PC-9 (cell line): ENCODE measurements at regions of chr7 and their contacts with region 1.

Region 1: DNA sequence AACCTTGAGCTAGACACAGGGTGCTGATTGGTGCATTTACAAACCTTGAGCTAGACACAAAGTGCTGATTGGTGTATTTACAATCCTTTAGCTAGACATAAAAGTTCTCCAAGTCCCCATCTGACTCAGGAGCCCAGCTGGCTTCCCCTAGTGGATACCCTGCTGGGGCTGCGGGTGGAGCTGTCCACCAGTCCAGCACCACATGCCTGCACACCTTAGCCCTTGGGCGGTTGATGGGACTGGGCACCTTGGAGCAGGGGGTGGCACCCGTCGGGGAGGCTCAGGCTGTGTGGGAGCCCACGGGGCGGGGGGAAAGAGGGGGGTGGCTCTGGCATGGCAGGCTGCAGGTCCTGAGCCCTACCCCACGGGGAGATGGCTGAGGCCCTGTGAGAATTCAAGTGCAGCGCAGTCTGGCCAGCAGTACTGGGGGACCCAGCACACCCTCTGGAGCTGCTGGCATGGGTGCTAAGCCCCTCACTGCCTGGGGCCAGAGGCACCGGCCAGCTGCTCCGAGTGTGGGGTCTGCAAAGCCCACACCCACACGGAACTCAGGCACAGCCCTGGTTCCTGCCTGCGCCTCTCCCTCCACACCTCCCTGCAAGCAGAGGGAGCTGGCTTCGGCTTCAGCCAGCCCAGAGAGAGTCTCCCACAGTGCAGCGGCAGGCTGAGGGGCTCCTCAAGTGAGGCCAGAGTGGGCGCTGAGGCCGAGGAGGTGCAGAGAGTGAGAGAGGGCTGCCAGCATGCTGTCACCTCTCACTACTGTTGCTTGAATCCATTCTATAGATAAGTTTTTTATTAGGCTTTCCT is 369.8 kb upstream of the SMIM30 start:
- DNase-seq: peak in 1 of 2 experiments; percentile 2
- H3K4me3 ChIP-seq: no peak overlapping the region
- H3K27ac ChIP-seq: no peak overlapping the region
- H3K4me1 ChIP-seq: no peaks in the 10 kb centered on the region
- H3K27me3 ChIP-seq: no peaks in the 10 kb centered on the region
- CTCF ChIP-seq: no peak

Region 2: DNA sequence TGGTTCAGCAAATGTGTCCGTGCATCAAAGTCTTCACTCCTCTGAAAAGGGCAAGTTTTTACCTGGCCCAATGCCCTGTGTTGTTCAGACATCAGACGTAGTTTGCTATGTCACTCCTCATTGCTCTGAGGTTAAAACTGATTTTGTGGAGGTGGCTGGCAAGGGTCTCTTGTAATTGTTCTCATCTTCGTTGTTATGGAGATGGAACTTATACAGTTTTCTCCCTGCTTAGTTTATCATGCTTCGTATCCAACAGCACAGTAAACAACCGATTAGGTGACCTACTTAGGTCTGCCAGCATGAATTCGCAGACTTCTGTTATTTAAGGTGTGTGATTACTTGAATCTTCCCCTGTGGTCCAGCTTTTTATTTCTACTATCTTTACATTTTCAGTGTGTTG is 95.7 kb before region 1 on chr7:
- CTCF ChIA-PET with region 1: no interaction called
- POLR2A ChIA-PET with region 1: no interaction called
- intact Hi-C with region 1: no loop called
- DNase-seq: no peak
- H3K4me3 ChIP-seq: no peak overlapping the region
- H3K27ac ChIP-seq: no peak overlapping the region
- H3K4me1 ChIP-seq: no peaks in the 10 kb centered on the region
- H3K27me3 ChIP-seq: no peaks in the 10 kb centered on the region
- CTCF ChIP-seq: no peak

Region 3: GRCh38 chr7:113684165-113684564 is 196.0 kb after region 1 on chr7:
- CTCF ChIA-PET with region 1: no interaction called
- POLR2A ChIA-PET with region 1: interaction called, 15 read pairs
- intact Hi-C with region 1: no loop called
- DNase-seq: no peak
- H3K4me3 ChIP-seq: no peak overlapping the region
- H3K27ac ChIP-seq: no peak overlapping the region
- H3K4me1 ChIP-seq: no peaks in the 10 kb centered on the region
- H3K27me3 ChIP-seq: no peaks in the 10 kb centered on the region
- CTCF ChIP-seq: no peak